Activated CD4-positive, alpha-beta T cell treated with anti-CD3 and anti-CD28 coated beads for 36 hours (primary cell): ENCODE measurements at regions of chr9 and their contacts with region 1.

Region 1: DNA sequence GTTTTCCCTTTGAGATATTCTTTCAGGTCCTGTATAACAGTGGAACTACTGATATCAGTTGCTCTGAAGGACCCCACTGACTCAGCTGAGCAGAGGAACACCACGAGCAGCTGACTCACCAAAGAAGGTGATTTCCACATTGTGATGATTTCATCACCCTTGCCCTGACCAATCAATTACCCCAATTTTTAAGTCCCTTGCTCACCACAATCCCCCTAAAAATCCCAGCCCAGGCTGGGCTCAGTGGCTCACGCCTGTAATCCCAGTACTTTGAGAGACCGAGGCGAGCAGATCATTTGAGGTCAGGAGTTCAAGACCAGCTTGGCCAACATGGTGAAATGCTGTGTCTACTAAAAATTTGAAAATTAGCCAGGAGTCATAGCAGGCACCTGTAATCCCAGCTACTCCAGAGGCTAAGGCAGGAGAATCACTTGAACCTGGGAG is 125.3 kb upstream of the ABCA1 start:
- DNase-seq: peak; percentile 85
- ATAC-seq: peak; percentile 95
- H3K4me3 Mint-ChIP-seq: peak overlapping the region; percentile 27
- H3K27ac Mint-ChIP-seq: peak overlapping the region; percentile 88
- H3K4me1 Mint-ChIP-seq: peaks cover 43% of the 10 kb centered on the region
- H3K27me3 Mint-ChIP-seq: no peaks in the 10 kb centered on the region

Region 2: GRCh38 chr9:104863180-104863883 is 189.9 kb before region 1 on chr9:
- CTCF ChIA-PET with region 1: no interaction called
- POLR2A ChIA-PET with region 1: no interaction called
- intact Hi-C with region 1: loop called in 1 of 2 experiments (anchors 10 kb)
- DNase-seq: peak; percentile 62
- ATAC-seq: peak; percentile 94
- H3K4me3 Mint-ChIP-seq: no peak overlapping the region
- H3K27ac Mint-ChIP-seq: no peak overlapping the region
- H3K4me1 Mint-ChIP-seq: peaks cover 7% of the 10 kb centered on the region
- H3K27me3 Mint-ChIP-seq: no peaks in the 10 kb centered on the region

Region 3: DNA sequence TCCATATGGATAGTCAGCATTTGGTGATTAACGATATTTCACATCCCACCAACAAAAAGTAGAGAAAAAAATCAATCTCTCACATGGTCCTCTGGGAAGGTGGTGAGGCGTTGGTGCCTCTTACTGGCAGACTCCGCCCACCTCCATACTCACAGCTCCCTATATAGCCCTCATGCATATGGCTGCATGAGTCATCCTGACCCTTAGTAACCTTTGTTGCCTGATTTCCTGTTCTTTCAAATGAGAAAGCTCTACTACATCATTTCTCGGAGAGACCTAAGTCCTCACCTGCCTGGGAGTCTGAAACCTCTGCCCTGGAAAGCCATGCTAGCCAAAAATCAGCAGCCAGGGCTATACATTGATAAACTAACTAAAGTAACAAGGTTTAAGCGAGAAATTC is 92.0 kb before region 1 on chr9:
- CTCF ChIA-PET with region 1: interaction called, 4 read pairs
- POLR2A ChIA-PET with region 1: interaction called, 3 read pairs
- intact Hi-C with region 1: loop called (anchors 1 kb)
- DNase-seq: peak; percentile 86
- ATAC-seq: peak; percentile 100
- H3K4me3 Mint-ChIP-seq: peak overlapping the region; percentile 18
- H3K27ac Mint-ChIP-seq: peak overlapping the region; percentile 91
- H3K4me1 Mint-ChIP-seq: peaks cover 32% of the 10 kb centered on the region
- H3K27me3 Mint-ChIP-seq: no peaks in the 10 kb centered on the region

Region 4: GRCh38 chr9:105064315-105065097 is 11.3 kb after region 1 on chr9:
- CTCF ChIA-PET with region 1: interaction called, 10 read pairs
- POLR2A ChIA-PET with region 1: interaction called, 3 read pairs
- intact Hi-C with region 1: loop called in 1 of 2 experiments (anchors 1 kb)
- DNase-seq: peak; percentile 10
- ATAC-seq: no peak
- H3K4me3 Mint-ChIP-seq: no peak overlapping the region
- H3K27ac Mint-ChIP-seq: peak overlapping the region; percentile 16
- H3K4me1 Mint-ChIP-seq: peaks cover 17% of the 10 kb centered on the region
- H3K27me3 Mint-ChIP-seq: no peaks in the 10 kb centered on the region

Region 5: DNA sequence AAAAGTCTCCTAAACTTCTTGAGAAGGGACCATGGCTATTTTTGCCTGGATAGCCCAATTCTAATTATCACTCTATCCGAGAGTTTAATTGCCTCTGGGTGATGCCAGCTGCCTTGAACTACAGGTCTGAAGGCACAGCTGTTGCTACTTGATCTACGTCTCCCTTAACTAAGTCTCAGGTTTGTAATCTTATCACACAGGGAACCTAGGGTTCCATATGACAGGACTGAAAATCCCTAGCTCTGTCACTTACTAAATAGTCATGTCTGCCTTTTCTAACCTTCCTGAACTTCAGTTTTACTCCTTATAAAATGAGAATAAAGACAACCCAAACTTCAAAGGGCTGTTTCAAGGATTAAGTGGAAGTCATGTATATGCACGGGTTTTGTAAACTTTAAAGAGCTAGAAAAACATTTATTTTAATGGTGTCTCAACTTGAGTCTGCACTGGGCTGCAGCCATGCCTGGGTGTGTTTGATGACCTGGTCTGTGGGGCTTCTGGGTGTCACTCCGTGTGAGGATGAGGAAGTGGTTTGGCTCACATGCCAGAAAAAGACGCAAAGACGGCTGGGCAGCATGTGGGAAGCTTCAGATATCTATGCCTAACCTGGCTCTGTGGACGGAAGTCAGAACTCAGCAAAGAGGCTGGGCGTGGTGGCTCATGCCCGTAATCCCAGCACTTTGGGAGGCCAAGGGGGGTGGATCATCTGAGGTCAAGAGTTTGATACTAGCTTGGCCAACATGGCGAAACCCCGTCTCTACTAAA is 61.9 kb after region 1 on chr9:
- CTCF ChIA-PET with region 1: no interaction called
- POLR2A ChIA-PET with region 1: no interaction called
- intact Hi-C with region 1: loop called in 1 of 2 experiments (anchors 2 kb)
- DNase-seq: peak; percentile 54
- ATAC-seq: peak; percentile 64
- H3K4me3 Mint-ChIP-seq: peak overlapping the region; percentile 7
- H3K27ac Mint-ChIP-seq: peak overlapping the region; percentile 58
- H3K4me1 Mint-ChIP-seq: peaks cover 25% of the 10 kb centered on the region
- H3K27me3 Mint-ChIP-seq: no peaks in the 10 kb centered on the region